ENCODE measurements at regions of chr6 and their contacts with region 1.

Region 1: DNA sequence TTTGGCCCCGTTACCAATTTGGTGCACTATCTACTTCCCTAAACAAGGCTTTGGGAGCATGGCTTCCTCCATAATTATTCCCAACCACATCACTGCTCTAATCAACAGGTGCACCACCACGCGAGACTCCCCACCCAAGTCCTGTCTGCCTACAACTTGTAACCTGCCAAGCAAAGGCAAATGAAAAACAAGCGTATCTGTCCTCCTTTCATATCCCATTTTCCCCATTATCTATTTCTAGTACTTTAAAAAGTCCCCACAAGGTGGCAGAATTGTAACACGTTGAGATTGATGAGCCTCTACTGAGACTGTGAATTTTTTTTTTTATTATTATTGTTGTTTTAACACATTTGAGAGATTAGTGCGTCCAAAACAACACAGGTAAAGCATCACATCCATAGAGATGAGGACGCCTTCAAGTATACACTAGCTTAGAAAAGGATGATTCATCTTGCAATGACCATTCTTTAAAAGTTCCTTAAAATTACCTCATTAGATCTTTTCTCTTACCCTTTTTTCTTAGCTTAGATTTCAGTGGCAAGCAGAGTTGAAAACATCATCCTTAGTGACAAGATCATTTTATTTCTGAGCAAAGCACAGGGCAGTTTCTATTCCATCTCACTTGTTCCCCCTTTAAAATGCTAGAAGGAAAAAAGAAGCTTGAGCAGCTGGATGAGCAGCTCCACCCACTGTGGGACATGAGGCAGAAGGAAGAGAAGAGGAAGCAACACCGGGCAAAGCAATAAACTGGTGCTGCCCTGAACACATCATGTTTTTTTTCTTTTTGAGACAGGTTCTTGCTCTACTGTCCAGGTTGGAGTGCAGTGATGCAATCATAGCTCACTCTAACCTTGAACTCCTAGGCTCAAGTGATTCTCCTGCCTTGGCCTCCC is 210.8 kb downstream of the ARHGAP18 start:
- H3K4me3 Mint-ChIP-seq: peak overlapping the region; percentile 53
- H3K27ac Mint-ChIP-seq: peak overlapping the region; percentile 70
- H3K4me1 Mint-ChIP-seq: peaks cover 30% of the 10 kb centered on the region
- H3K27me3 Mint-ChIP-seq: no peaks in the 10 kb centered on the region

Region 2: DNA sequence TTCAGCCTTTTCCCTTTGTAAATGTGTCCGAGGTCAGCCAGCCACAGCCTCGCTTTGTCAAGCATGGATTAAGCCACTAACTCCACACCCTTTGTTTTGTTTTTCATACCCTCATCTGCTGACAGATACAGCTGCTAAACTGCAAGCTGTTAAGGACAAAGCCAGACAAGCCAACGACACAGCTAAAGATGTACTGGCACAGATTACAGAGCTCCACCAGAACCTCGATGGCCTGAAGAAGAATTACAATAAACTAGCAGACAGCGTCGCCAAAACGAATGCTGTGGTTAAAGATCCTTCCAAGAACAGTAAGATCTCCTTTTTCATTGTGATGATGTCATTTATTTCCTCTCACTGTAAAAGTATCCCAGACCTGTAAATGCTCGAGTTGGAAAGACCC is 58.5 kb before region 1 on chr6:
- intact Hi-C with region 1: no loop called
- H3K4me3 Mint-ChIP-seq: no peak overlapping the region
- H3K27ac Mint-ChIP-seq: no peak overlapping the region
- H3K4me1 Mint-ChIP-seq: no peaks in the 10 kb centered on the region
- H3K27me3 Mint-ChIP-seq: peaks cover 1% of the 10 kb centered on the region

Region 3: GRCh38 chr6:129575378-129576118 is 76.4 kb after region 1 on chr6:
- intact Hi-C with region 1: loop called (anchors 2 kb)
- H3K4me3 Mint-ChIP-seq: no peak overlapping the region
- H3K27ac Mint-ChIP-seq: no peak overlapping the region
- H3K4me1 Mint-ChIP-seq: no peaks in the 10 kb centered on the region
- H3K27me3 Mint-ChIP-seq: no peaks in the 10 kb centered on the region

Region 4: GRCh38 chr6:129936329-129937165 is 437.4 kb after region 1 on chr6:
- intact Hi-C with region 1: loop called (anchors 10 kb)
- H3K4me3 Mint-ChIP-seq: no peak overlapping the region
- H3K27ac Mint-ChIP-seq: no peak overlapping the region
- H3K4me1 Mint-ChIP-seq: no peaks in the 10 kb centered on the region
- H3K27me3 Mint-ChIP-seq: peaks cover 13% of the 10 kb centered on the region

Measured in dendritic cell treated with granulocyte-macrophage colony-stimulating factor and Interleukin-4, amounts not matched to agents 40 ng/mL and 50 ng/mL, for 4 days (primary cell).